Stomach (tissue), 19 donors: ENCODE measurements at regions of chr19 and their contacts with region 1.

Region 1: GRCh38 chr19:732148-733069 is 18.5 kb upstream of the MISP start:
- DNase-seq: no peak
- H3K4me3 ChIP-seq: no peak overlapping the region
- H3K27ac ChIP-seq: no peak overlapping the region
- H3K4me1 ChIP-seq: peaks cover 0 to 9% (median 7%) of the 10 kb centered on the region in 4 donors
- H3K27me3 ChIP-seq: no peaks in the 10 kb centered on the region
- CTCF ChIP-seq: no peak
- EP300 ChIP-seq: no peak
- POLR2A ChIP-seq: no peak

Region 2: DNA sequence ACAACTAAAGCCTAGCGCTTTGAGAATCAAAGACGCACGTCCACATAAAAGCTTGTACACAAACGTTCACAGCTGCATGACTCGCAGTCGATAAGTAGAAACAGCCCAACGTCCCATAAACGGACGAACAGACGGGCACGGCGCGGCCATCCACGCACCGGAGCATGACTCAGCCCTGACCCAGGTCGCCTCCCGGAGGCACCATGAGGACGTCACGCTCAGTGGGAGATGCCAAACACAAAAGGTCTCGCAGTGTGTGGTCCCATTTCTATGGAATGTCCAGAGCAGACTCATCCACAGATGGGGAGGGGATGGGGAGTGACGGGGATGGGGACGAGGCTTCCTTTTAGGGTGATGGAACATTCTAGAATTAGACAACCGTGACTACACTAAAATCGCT is 108.4 kb before region 1 on chr19:
- intact Hi-C with region 1: no loop called
- DNase-seq: no peak
- H3K4me3 ChIP-seq: no peak overlapping the region
- H3K27ac ChIP-seq: no peak overlapping the region
- H3K4me1 ChIP-seq: peaks cover 0 to 1% (median 0%) of the 10 kb centered on the region in 4 donors
- H3K27me3 ChIP-seq: no peaks in the 10 kb centered on the region
- CTCF ChIP-seq: no peak
- EP300 ChIP-seq: no peak
- POLR2A ChIP-seq: no peak

Region 3: GRCh38 chr19:664913-665443 is 67.4 kb before region 1 on chr19:
- intact Hi-C with region 1: loop called (anchors 5 kb)
- DNase-seq: peak; percentile 83 to 93
- H3K4me3 ChIP-seq: peak overlapping the region in 2 of 4 donors; percentile 11 to 32
- H3K27ac ChIP-seq: peak overlapping the region in 1 of 5 donors; percentile 60
- H3K4me1 ChIP-seq: peaks cover 35 to 48% (median 42%) of the 10 kb centered on the region in 4 donors
- H3K27me3 ChIP-seq: no peaks in the 10 kb centered on the region
- CTCF ChIP-seq: peak in 6 of 7 experiments; percentile 20 to 97 (median 90)
- EP300 ChIP-seq: no peak
- POLR2A ChIP-seq: no peak

Region 4: GRCh38 chr19:900302-901111 is 168.1 kb after region 1 on chr19:
- intact Hi-C with region 1: no loop called
- DNase-seq: peak in 1 of 2 donors; percentile 67
- H3K4me3 ChIP-seq: no peak overlapping the region
- H3K27ac ChIP-seq: no peak overlapping the region
- H3K4me1 ChIP-seq: peaks cover 0 to 32% (median 9%) of the 10 kb centered on the region in 4 donors
- H3K27me3 ChIP-seq: no peaks in the 10 kb centered on the region
- CTCF ChIP-seq: no peak
- EP300 ChIP-seq: no peak
- POLR2A ChIP-seq: no peak